ENCODE measurements at regions of chr7 and their contacts with region 1.

Region 1: DNA sequence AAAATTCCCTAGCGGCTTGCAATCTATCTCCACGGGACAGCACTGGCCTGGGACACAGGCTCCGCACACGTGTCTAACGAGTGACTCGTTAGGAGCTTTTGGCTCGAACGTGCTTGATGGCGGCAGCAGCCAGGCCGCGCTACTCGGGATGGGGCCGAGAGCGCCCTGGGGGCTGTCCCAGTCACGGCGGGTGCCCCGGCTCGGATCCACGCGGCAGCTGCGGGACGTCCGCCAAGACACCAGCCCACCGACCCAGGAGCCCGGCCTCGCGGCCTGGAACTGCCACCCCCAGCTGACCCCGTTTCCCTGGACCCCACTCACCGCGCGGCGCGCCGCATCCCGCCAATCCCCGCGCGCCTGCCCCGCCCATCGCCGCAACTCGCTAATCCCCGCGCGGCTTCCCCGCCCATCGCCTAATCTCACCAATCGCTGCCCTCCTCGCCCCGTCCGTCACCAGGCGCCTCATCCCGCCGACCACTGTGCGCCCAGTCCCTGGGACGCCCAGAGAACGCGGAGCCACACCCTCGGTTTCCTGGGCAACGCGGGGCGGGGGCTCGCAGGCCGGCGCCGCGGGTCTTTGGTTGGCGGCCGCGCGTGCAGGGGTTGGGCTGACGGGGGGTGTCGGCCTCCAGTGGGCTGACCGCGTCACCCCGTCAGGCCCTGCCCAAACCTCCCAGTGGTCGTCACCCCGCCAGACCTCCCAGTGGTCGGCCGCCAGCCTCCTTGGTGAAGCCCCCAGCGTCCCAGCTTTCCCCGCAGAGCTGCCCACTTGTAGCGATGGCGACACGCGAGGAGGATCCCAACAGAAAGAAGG is at the start of gene POLD2:
- DNase-seq: peak; percentile 98
- H3K4me3 Mint-ChIP-seq: peak within 1 kb of the TSS; percentile 88
- H3K27ac Mint-ChIP-seq: peak within 1 kb of the TSS; percentile 74
- H3K4me1 Mint-ChIP-seq: peaks cover 43% of the 10 kb centered on the region
- H3K27me3 Mint-ChIP-seq: no peaks in the 10 kb centered on the region
- total RNA-seq, gene POLD2: 261 to 270 TPM

Region 2: DNA sequence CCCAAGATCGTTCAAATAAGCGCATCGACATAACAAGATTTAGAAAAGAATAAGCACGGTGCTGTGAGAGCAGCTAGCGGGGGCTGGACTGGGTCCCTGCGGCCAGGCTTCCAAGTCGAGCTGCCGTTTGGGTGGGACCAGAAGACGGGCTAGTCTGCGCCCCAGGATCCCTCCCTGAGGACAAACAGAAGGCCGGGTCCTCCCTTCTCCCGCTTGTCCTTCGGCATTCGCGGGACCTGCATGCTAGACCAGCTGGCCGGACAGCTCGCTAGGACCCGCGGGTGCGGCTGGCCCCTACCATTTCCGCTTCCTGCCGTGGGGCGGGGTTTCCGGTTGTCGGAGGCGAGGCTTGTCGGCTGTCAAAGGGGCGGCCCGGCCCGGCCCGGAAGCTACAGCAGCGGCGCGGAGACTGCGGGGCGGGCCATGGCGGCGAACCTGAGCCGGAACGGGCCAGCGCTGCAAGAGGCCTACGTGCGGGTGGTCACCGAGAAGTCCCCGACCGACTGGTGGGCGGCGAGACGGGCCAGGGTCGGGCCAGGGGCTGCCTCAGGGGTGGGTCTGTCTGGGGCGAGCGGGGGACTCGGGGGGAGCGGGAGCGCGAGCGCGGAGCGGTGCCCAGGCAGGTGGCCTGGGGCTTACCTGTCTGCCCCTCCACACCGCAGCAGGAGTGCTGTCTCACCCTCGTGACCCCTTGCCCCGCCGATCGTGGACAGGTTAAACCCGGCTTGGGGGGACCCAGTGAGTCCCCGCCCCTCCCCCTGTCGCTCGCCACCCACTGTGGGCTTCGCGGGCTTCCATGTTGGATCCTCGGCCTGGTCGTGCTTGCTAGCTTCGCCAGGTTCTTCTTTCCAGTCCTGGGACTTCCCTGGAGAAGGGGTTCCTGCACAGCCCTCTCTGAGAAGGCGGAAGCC is 78.8 kb before region 1 on chr7 and contains the start of gene DBNL:
- CTCF ChIA-PET with region 1: interaction called, 3 read pairs
- intact Hi-C with region 1: loop called (anchors 2 kb)
- DNase-seq: peak; percentile 95
- H3K4me3 Mint-ChIP-seq: peak within 1 kb of the TSS; percentile 79
- H3K27ac Mint-ChIP-seq: peak within 1 kb of the TSS; percentile 89
- H3K4me1 Mint-ChIP-seq: peaks cover 48% of the 10 kb centered on the region
- H3K27me3 Mint-ChIP-seq: no peaks in the 10 kb centered on the region
- total RNA-seq, gene DBNL: 82.3 TPM

Region 3: DNA sequence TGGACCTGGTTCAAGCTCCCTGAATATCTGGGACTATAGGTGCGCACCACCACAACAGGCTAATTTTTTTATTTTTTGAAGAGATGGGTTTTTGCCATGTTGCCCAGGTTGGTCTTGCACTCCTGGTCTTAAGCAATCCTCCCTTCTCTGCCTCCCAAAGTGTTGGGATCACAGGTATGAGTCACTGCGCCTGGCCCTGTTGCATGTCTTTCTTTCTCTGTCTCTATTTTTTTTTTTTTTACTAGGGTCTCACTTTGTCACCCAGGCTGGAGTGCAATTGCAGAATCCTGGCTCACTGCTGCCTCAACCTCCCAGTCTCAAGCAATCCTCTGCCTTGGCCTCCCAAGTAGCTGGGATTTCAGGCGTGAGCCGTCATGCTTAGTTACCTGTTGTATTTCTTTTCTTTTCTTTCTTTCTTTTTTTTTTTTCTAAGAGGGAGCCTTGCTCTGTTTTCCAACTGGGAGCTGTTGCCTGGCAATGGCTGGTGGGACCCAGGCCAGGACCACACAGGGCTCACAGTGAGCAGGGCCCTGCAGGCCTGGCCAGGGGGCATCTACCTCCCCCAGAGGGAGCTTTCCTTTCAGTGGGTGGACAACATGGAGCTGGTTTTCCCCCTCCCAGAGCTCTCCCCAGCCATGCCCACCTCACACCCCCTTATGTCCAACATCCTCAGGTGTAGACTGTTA is 11.7 kb after region 1 on chr7:
- CTCF ChIA-PET with region 1: no interaction called
- intact Hi-C with region 1: no loop called
- DNase-seq: no peak
- H3K4me3 Mint-ChIP-seq: no peak overlapping the region
- H3K27ac Mint-ChIP-seq: no peak overlapping the region
- H3K4me1 Mint-ChIP-seq: no peaks in the 10 kb centered on the region
- H3K27me3 Mint-ChIP-seq: no peaks in the 10 kb centered on the region

Region 4: DNA sequence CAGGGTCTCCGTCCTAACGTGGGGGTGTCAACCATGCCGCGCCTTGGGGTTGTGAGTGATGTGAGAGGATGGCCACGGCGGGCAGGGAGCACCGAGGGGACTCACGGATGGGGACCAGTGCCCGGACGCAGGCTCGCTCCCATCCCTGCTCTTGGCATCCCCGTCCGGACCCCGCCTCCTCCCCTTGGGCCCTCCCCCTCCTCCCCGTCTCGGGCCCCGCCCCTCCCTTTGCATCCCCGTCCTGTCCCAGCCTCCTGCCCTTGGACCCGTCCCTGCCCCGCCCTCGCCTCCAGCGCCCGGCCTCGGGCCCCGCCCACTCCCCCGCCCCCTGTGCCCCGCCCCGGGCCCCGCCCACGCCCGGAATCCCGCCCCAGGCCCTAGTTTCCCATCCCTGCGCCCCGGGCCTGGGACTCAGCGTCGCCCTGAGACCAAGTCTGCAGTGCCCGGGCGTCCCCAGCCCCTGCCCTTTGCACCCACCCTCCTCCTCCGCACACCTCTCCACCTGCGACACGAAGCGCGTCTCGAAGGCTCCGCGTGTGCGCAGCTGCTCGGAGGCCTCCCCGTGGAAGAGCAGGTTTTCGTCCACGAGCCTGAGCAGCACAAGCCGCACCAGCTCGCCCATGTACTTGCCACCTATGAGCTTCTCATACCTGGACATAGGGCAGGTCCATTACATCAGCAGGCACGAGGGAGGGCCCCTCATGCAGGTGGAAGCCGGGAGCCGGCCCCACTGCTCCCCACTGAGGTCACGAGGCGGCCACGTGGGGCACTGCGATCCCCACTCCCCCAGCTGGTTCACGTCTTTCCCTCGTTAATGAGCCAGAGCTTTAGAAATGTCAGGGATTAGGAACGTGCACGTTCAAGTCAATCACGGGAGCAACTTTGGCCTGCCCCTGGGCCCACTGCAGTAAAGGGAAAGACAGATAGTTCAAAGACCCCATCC is 22.8 kb after region 1 on chr7:
- CTCF ChIA-PET with region 1: no interaction called
- intact Hi-C with region 1: loop called (anchors 1 kb)
- DNase-seq: peak; percentile 80
- H3K4me3 Mint-ChIP-seq: peak overlapping the region; percentile 69
- H3K27ac Mint-ChIP-seq: no peak overlapping the region
- H3K4me1 Mint-ChIP-seq: peaks cover 9% of the 10 kb centered on the region
- H3K27me3 Mint-ChIP-seq: peaks cover 4% of the 10 kb centered on the region

Region 5: GRCh38 chr7:44194069-44194468 is 70.7 kb after region 1 on chr7:
- CTCF ChIA-PET with region 1: interaction called, 3 read pairs
- intact Hi-C with region 1: loop called (anchors 1 kb)
- DNase-seq: peak; percentile 80
- H3K4me3 Mint-ChIP-seq: no peak overlapping the region
- H3K27ac Mint-ChIP-seq: no peak overlapping the region
- H3K4me1 Mint-ChIP-seq: peaks cover 8% of the 10 kb centered on the region
- H3K27me3 Mint-ChIP-seq: peaks cover 2% of the 10 kb centered on the region

Region 6: GRCh38 chr7:44200647-44201461 is 77.5 kb after region 1 on chr7 and contains the start of gene YKT6:
- CTCF ChIA-PET with region 1: interaction called, 3 read pairs
- intact Hi-C with region 1: loop called (anchors 1 kb)
- DNase-seq: peak; percentile 98
- H3K4me3 Mint-ChIP-seq: peak within 1 kb of the TSS; percentile 82
- H3K27ac Mint-ChIP-seq: peak within 1 kb of the TSS; percentile 56
- H3K4me1 Mint-ChIP-seq: peaks cover 28% of the 10 kb centered on the region
- H3K27me3 Mint-ChIP-seq: no peaks in the 10 kb centered on the region
- total RNA-seq, gene YKT6: 53.5 to 57.3 TPM